ENCODE measurements at regions of chr11 and their contacts with region 1.

Region 1: GRCh38 chr11:109586789-109587188 is 164.8 kb downstream of the C11orf87 start:
- DNase-seq: no peak
- ATAC-seq: no peak
- H3K4me3 ChIP-seq: no peak overlapping the region
- H3K27ac ChIP-seq: no peak overlapping the region
- H3K4me1 ChIP-seq: no peaks in the 10 kb centered on the region
- H3K27me3 ChIP-seq: no peaks in the 10 kb centered on the region
- CTCF ChIP-seq: no peak
- POLR2A ChIP-seq: no peak
- RAD21 ChIP-seq: no peak

Region 2: GRCh38 chr11:109362059-109362458 is 224.7 kb before region 1 on chr11:
- CTCF ChIA-PET with region 1: no interaction called
- POLR2A ChIA-PET with region 1: no interaction called
- RAD21 ChIA-PET with region 1: interaction called in 1 of 2 experiments, 10 read pairs
- intact Hi-C with region 1: no loop called
- DNase-seq: no peak
- ATAC-seq: no peak
- H3K4me3 ChIP-seq: no peak overlapping the region
- H3K27ac ChIP-seq: no peak overlapping the region
- H3K4me1 ChIP-seq: peaks cover 0 to 6% of the 10 kb centered on the region in 2 experiments; a peak in 1 of 4 replicates
- H3K27me3 ChIP-seq: no peaks in the 10 kb centered on the region
- CTCF ChIP-seq: no peak
- POLR2A ChIP-seq: no peak
- RAD21 ChIP-seq: no peak

Region 3: DNA sequence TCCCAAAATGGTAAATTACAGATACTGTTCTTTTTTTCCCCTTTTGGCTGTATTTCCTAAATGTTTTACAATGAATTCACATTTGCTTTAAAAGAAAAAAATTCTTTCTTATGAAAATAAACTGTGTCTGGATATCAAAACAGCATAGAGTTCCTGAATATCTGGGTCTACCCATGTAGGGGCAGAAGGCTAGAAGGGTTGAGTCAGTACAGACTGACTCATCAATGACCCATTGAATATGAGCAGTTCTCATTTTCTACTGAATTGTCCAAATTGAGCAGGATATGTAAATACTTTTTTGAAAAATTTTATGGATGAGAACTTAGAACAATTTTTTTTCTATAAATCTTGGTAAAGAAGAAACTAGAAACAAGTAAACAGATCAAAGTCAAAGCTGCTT is 181.1 kb before region 1 on chr11:
- CTCF ChIA-PET with region 1: no interaction called
- POLR2A ChIA-PET with region 1: no interaction called
- RAD21 ChIA-PET with region 1: no interaction called
- intact Hi-C with region 1: no loop called
- DNase-seq: no peak
- ATAC-seq: no peak
- H3K4me3 ChIP-seq: no peak overlapping the region
- H3K27ac ChIP-seq: no peak overlapping the region
- H3K4me1 ChIP-seq: no peaks in the 10 kb centered on the region
- H3K27me3 ChIP-seq: no peaks in the 10 kb centered on the region
- CTCF ChIP-seq: no peak
- POLR2A ChIP-seq: no peak
- RAD21 ChIP-seq: no peak

Measured in HCT116 (cell line).